ENCODE measurements at regions of chr19 and their contacts with region 1.

Region 1: GRCh38 chr19:18340190-18340989 is at the start of gene PGPEP1:
- DNase-seq: no peak
- ATAC-seq: peak; percentile 46
- H3K4me3 ChIP-seq: peak within 1 kb of the TSS; percentile 76 to 97 (median 89)
- H3K27ac ChIP-seq: peak within 1 kb of the TSS; percentile 88
- H3K4me1 ChIP-seq: peaks cover 67% of the 10 kb centered on the region
- H3K27me3 ChIP-seq: no peaks in the 10 kb centered on the region
- CTCF ChIP-seq: no peak
- EP300 ChIP-seq: no peak; a peak in 1 of 4 replicates
- POLR2A ChIP-seq: peak in 1 of 2 experiments; percentile 67; a peak in 2 of 4 replicates
- RAD21 ChIP-seq: no peak
- total RNA-seq, gene PGPEP1: 56.6 and 57.7 TPM in 2 replicates

Region 2: GRCh38 chr19:18259893-18260292 is 80.5 kb before region 1 on chr19:
- CTCF ChIA-PET with region 1: no interaction called
- POLR2A ChIA-PET with region 1: no interaction called
- in situ Hi-C with region 1: no loop called
- intact Hi-C with region 1: no loop called
- DNase-seq: no peak
- ATAC-seq: no peak
- H3K4me3 ChIP-seq: no peak overlapping the region
- H3K27ac ChIP-seq: no peak overlapping the region
- H3K4me1 ChIP-seq: peaks cover 19% of the 10 kb centered on the region
- H3K27me3 ChIP-seq: peaks cover 10 to 31% of the 10 kb centered on the region in 2 experiments; a peak in 4 of 5 replicates
- CTCF ChIP-seq: no peak
- EP300 ChIP-seq: no peak
- POLR2A ChIP-seq: no peak
- RAD21 ChIP-seq: no peak

Region 3: GRCh38 chr19:18328340-18329034 is 11.9 kb before region 1 on chr19:
- CTCF ChIA-PET with region 1: no interaction called
- POLR2A ChIA-PET with region 1: interaction called, 36 read pairs
- in situ Hi-C with region 1: no loop called
- intact Hi-C with region 1: no loop called
- DNase-seq: peak; percentile 97
- ATAC-seq: peak; percentile 92
- H3K4me3 ChIP-seq: peak overlapping the region; percentile 9 to 59 (median 29)
- H3K27ac ChIP-seq: peak overlapping the region; percentile 69
- H3K4me1 ChIP-seq: peaks cover 73% of the 10 kb centered on the region
- H3K27me3 ChIP-seq: no peaks in the 10 kb centered on the region
- CTCF ChIP-seq: peak; percentile 90
- EP300 ChIP-seq: 0 out of 4 replicates have a peak, but pooled peaks of 1 of the 2 experiments have one; percentile 9
- POLR2A ChIP-seq: peak in 1 of 2 experiments; percentile 71; a peak in 2 of 4 replicates
- RAD21 ChIP-seq: peak; percentile 58; the same call in 1 of the 2 replicates

Region 4: GRCh38 chr19:18401580-18402112 is 61.3 kb after region 1 on chr19:
- CTCF ChIA-PET with region 1: no interaction called
- POLR2A ChIA-PET with region 1: interaction called, 5 read pairs
- in situ Hi-C with region 1: loop called (anchors 10 kb)
- intact Hi-C with region 1: loop called (anchors 5 kb)
- DNase-seq: peak; percentile 76
- ATAC-seq: peak; percentile 76
- H3K4me3 ChIP-seq: peak overlapping the region; percentile 28 to 63 (median 35); a peak in 5 of 6 replicates
- H3K27ac ChIP-seq: no peak overlapping the region
- H3K4me1 ChIP-seq: peaks cover 54% of the 10 kb centered on the region
- H3K27me3 ChIP-seq: peaks cover 0 to 17% of the 10 kb centered on the region in 2 experiments; a peak in 4 of 5 replicates
- CTCF ChIP-seq: peak; percentile 63
- EP300 ChIP-seq: 0 out of 4 replicates have a peak, but pooled peaks of 1 of the 2 experiments have one; percentile 14
- POLR2A ChIP-seq: no peak
- RAD21 ChIP-seq: 0 out of 2 replicates have a peak, but pooled peaks have one; percentile 28

Region 5: DNA sequence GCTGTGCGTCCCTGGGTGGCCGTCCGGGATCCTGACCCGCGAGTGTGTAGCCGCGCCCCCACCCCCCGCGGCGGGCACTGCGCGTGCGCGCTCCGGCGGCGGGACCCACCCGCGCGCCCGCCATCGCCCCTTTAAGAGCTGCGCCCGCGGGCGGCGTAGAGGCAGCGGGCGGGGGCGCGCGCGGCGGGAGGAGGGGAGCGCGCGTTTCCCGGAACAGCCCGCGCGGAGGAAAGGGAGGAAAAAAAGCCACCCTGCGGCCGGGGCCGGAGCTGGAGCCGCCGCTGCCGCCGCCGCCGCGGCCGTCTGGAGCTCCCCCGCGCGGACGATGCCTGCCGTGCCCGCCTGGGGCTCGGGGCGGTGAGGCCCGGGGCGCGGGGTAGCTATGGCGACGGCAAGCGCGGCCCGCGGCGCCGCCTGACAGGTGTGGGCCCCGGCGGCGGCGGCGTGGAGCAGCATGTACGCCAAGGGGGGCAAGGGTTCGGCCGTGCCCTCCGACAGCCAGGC is 78.9 kb after region 1 on chr19 and contains the start of gene SSBP4:
- CTCF ChIA-PET with region 1: no interaction called
- POLR2A ChIA-PET with region 1: interaction called, 4 read pairs
- in situ Hi-C with region 1: no loop called
- intact Hi-C with region 1: loop called (anchors 5 kb)
- DNase-seq: peak; percentile 66
- ATAC-seq: peak; percentile 23
- H3K4me3 ChIP-seq: peak within 1 kb of the TSS; percentile 60 to 78 (median 76); a peak in 5 of 6 replicates
- H3K27ac ChIP-seq: peak within 1 kb of the TSS; percentile 64
- H3K4me1 ChIP-seq: peaks cover 65% of the 10 kb centered on the region
- H3K27me3 ChIP-seq: no peaks in the 10 kb centered on the region
- CTCF ChIP-seq: peak; percentile 34; the same call in 1 of the 2 replicates
- EP300 ChIP-seq: peak in 1 of 2 experiments; percentile 87; a peak in 2 of 4 replicates
- POLR2A ChIP-seq: no peak
- RAD21 ChIP-seq: peak; percentile 88
- total RNA-seq, gene SSBP4: 19.3 and 39.5 TPM in 2 replicates

Region 6: GRCh38 chr19:18436671-18437490 is 96.5 kb after region 1 on chr19:
- CTCF ChIA-PET with region 1: no interaction called
- POLR2A ChIA-PET with region 1: no interaction called
- in situ Hi-C with region 1: no loop called
- intact Hi-C with region 1: no loop called
- DNase-seq: peak; percentile 57
- ATAC-seq: peak; percentile 9
- H3K4me3 ChIP-seq: peak overlapping the region in 2 of 3 experiments; percentile 72 to 75; a peak in 3 of 6 replicates
- H3K27ac ChIP-seq: no peak overlapping the region
- H3K4me1 ChIP-seq: peaks cover 39% of the 10 kb centered on the region
- H3K27me3 ChIP-seq: no peaks in the 10 kb centered on the region
- CTCF ChIP-seq: no peak
- EP300 ChIP-seq: no peak
- POLR2A ChIP-seq: no peak
- RAD21 ChIP-seq: no peak

Measured in HepG2 (cell line).